Esophagus squamous epithelium (tissue), 5 donors: ENCODE measurements at regions of chr7 and their contacts with region 1.

Region 1: GRCh38 chr7:44587843-44588711 is 6.0 kb upstream of the TMED4 start:
- DNase-seq: no peak
- H3K4me3 ChIP-seq: no peak overlapping the region
- H3K27ac ChIP-seq: no peak overlapping the region
- H3K4me1 ChIP-seq: peaks cover 0 to 6% (median 1%) of the 10 kb centered on the region in 3 donors
- H3K27me3 ChIP-seq: no peaks in the 10 kb centered on the region
- CTCF ChIP-seq: peak; percentile 44 to 75 (median 54)
- POLR2A ChIP-seq: no peak

Region 2: DNA sequence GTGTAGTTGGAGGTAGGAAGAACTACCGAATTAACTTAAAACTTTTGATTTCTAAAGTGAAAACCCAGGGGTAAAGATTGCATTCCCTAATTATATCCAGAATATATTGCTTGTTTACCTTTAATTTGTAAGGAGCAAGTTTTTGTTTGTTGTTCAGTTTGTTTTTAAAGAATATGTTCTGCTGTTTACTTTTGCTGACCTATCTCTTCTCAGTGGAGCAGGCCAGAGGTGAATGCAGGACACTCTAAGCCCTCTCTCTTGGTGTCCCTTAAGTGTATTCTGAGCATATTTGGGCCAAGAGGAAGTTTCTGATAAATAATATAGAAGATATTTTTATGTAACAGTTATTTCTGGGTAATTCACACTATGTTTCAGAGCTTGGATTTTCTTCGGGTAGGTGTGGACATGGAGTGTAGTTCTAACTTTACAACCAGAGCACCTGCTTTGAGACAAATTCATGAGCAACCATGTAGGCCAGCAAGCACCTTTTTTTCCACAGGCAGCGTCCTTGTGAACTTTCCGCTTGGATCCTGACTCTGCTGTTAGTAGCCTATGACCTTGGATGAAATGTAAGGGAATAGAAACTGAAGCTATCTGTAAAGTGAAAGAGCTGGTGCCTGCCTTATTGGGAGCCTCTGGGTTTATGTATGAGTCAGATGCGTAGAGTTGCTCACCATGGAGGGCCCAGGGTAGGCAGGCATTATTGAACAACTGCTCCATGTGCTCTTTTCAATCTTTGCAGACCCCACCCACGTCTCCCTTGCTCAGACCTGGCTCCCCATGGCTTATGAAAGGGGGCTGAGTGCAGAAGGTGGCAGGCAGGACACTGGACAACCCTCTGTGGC is 34.5 kb after region 1 on chr7:
- intact Hi-C with region 1: no loop called
- DNase-seq: no peak
- H3K4me3 ChIP-seq: no peak overlapping the region
- H3K27ac ChIP-seq: peak overlapping the region in 3 of 4 donors; percentile 61 to 68 (median 64)
- H3K4me1 ChIP-seq: peaks cover 21 to 74% (median 42%) of the 10 kb centered on the region in 3 donors
- H3K27me3 ChIP-seq: no peaks in the 10 kb centered on the region
- CTCF ChIP-seq: no peak
- POLR2A ChIP-seq: no peak

Region 3: GRCh38 chr7:44847508-44847920 is 259.4 kb after region 1 on chr7:
- intact Hi-C with region 1: loop called (anchors 5 kb)
- DNase-seq: peak; percentile 65
- H3K4me3 ChIP-seq: peak overlapping the region; percentile 65 to 84 (median 77)
- H3K27ac ChIP-seq: peak overlapping the region; percentile 95 to 99 (median 98)
- H3K4me1 ChIP-seq: peaks cover 0 to 56% (median 11%) of the 10 kb centered on the region in 3 donors
- H3K27me3 ChIP-seq: no peaks in the 10 kb centered on the region
- CTCF ChIP-seq: peak; percentile 76 to 93 (median 89)
- POLR2A ChIP-seq: no peak

Region 4: GRCh38 chr7:45259966-45260646 is 672.0 kb after region 1 on chr7:
- intact Hi-C with region 1: no loop called
- DNase-seq: no peak
- H3K4me3 ChIP-seq: no peak overlapping the region
- H3K27ac ChIP-seq: no peak overlapping the region
- H3K4me1 ChIP-seq: peaks cover 0 to 4% (median 0%) of the 10 kb centered on the region in 3 donors
- H3K27me3 ChIP-seq: peaks cover 0 to 17% (median 0%) of the 10 kb centered on the region in 4 donors
- CTCF ChIP-seq: peak; percentile 90 to 100 (median 93)
- POLR2A ChIP-seq: no peak